Mammary epithelial cell (primary cell): ENCODE measurements at regions of chr5 and their contacts with region 1.

Region 1: GRCh38 chr5:83473346-83474163 is 2.0 kb downstream of the VCAN start:
- DNase-seq: peak; percentile 97
- H3K4me3 ChIP-seq: peak overlapping the region; percentile 59 to 68 (median 68)
- H3K27ac ChIP-seq: peak overlapping the region; percentile 96
- H3K4me1 ChIP-seq: peaks cover 28% of the 10 kb centered on the region
- H3K27me3 ChIP-seq: peaks cover under 1% of the 10 kb centered on the region
- CTCF ChIP-seq: peak; percentile 71 to 88

Region 2: DNA sequence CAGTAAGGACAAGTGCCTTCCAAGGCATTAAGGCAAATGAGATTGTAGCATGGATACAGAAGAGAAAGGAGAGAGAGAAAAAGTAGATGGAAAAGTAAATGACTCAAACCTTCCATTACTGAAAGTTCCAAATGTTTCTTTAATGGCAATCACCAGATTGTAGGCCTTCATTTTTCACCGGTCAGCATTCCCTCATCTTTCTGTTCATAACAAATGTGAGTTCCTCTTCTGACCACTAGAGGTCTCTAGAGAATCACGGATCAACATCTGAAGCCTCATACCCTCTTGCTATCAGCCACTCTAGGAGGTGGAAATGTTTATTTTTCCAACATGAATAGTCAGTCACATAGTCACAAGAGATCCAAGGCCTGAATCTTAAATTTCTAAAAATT is 1121.8 kb before region 1 on chr5:
- CTCF ChIA-PET with region 1: interaction called, 4 read pairs
- dilution Hi-C with region 1: no loop called
- in situ Hi-C with region 1: loop called in 1 of 2 experiments (anchors 25 kb)
- intact Hi-C with region 1: loop called (anchors 2 kb)
- DNase-seq: peak; percentile 69
- H3K4me3 ChIP-seq: no peak overlapping the region
- H3K27ac ChIP-seq: no peak overlapping the region
- H3K4me1 ChIP-seq: peaks cover 3% of the 10 kb centered on the region
- H3K27me3 ChIP-seq: no peaks in the 10 kb centered on the region
- CTCF ChIP-seq: peak; percentile 64 to 70

Region 3: GRCh38 chr5:82406205-82406773 is 1067.3 kb before region 1 on chr5:
- CTCF ChIA-PET with region 1: no interaction called
- dilution Hi-C with region 1: no loop called
- in situ Hi-C with region 1: no loop called
- intact Hi-C with region 1: loop called (anchors 5 kb)
- DNase-seq: peak; percentile 100
- H3K4me3 ChIP-seq: peak overlapping the region in 2 of 3 experiments; percentile 22 to 45
- H3K27ac ChIP-seq: peak overlapping the region; percentile 100
- H3K4me1 ChIP-seq: peaks cover 25% of the 10 kb centered on the region
- H3K27me3 ChIP-seq: no peaks in the 10 kb centered on the region
- CTCF ChIP-seq: no peak

Region 4: DNA sequence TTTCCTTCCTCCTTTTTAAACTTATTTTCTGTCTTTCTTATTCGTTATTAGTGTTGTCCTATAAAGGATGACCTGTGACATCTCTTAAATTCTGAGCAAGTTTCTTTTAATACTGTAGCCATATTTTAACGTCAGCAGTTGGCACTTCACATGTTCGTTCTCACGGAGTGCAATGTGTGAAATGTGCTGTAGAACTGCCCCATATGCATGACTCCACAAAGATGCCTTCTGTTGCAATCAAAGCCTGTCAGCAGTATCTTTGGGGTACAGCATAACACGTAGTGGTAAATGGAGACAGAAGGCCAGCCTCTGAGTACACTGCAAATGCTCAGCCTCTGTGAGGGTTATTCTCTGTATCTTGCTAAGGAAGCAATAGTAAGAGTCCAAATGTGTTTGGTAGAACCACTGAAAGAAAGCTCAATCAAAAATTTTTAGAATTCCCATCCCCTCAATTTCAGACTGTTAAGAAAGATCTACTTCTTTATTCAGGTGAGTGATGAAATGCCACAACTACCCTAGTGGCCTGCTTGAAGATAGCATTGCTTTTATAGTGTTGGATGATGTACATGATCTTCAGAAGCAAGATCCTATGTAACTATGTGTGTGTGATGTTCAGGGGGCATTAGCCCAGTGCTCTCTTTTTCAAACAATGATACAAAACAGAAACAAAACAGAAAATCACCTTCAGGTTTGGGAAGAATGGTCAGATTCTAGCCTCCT is 674.0 kb before region 1 on chr5:
- CTCF ChIA-PET with region 1: no interaction called
- dilution Hi-C with region 1: no loop called
- in situ Hi-C with region 1: no loop called
- intact Hi-C with region 1: loop called (anchors 5 kb)
- DNase-seq: no peak
- H3K4me3 ChIP-seq: no peak overlapping the region
- H3K27ac ChIP-seq: no peak overlapping the region
- H3K4me1 ChIP-seq: peaks cover 3% of the 10 kb centered on the region
- H3K27me3 ChIP-seq: no peaks in the 10 kb centered on the region
- CTCF ChIP-seq: peak in 1 of 2 donors; percentile 30

Region 5: DNA sequence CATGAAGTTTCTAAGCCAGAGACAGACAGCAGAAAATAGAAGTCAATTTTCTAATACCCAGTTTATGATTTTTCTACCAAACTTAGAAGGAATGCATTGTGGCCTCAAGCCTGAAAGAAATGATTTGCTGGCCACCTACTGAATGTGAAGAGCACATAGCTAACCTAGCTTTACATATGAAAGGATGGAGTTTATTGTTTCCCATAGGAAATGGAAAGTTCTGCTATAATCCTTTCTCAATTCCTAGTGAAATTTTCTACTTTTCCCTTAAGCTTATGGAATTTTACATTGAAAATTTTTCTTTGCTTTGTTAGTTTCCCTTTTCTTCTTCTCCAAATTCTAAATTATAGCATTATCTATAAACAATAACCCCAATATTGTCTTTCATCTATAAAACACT is 506.5 kb before region 1 on chr5:
- CTCF ChIA-PET with region 1: no interaction called
- dilution Hi-C with region 1: no loop called
- in situ Hi-C with region 1: no loop called
- intact Hi-C with region 1: loop called (anchors 5 kb)
- DNase-seq: no peak
- H3K4me3 ChIP-seq: no peak overlapping the region
- H3K27ac ChIP-seq: no peak overlapping the region
- H3K4me1 ChIP-seq: peaks cover 6% of the 10 kb centered on the region
- H3K27me3 ChIP-seq: no peaks in the 10 kb centered on the region
- CTCF ChIP-seq: no peak

Region 6: GRCh38 chr5:83430130-83431010 is 43.2 kb before region 1 on chr5:
- CTCF ChIA-PET with region 1: interaction called, 3 read pairs
- dilution Hi-C with region 1: no loop called
- in situ Hi-C with region 1: no loop called
- intact Hi-C with region 1: loop called (anchors 1 kb)
- DNase-seq: peak; percentile 46
- H3K4me3 ChIP-seq: no peak overlapping the region
- H3K27ac ChIP-seq: no peak overlapping the region
- H3K4me1 ChIP-seq: no peaks in the 10 kb centered on the region
- H3K27me3 ChIP-seq: no peaks in the 10 kb centered on the region
- CTCF ChIP-seq: peak; percentile 95